CD4-positive, alpha-beta T cell (primary cell): ENCODE measurements at regions of chr20 and their contacts with region 1.

Region 1: GRCh38 chr20:32902456-32903420 is 44.0 kb downstream of the EFCAB8 start:
- DNase-seq: peak; percentile 61 to 85 (median 66)
- ATAC-seq: peak; percentile 95
- H3K4me3 ChIP-seq: no peak overlapping the region
- H3K4me3 Mint-ChIP-seq: no peak overlapping the region
- H3K27ac ChIP-seq: no peak overlapping the region
- H3K27ac Mint-ChIP-seq: peak overlapping the region; percentile 47
- H3K4me1 ChIP-seq: peaks cover 36% of the 10 kb centered on the region
- H3K4me1 Mint-ChIP-seq: peaks cover 37% of the 10 kb centered on the region
- H3K27me3 ChIP-seq: no peaks in the 10 kb centered on the region
- H3K27me3 Mint-ChIP-seq: no peaks in the 10 kb centered on the region
- CTCF ChIP-seq: peak; percentile 90

Region 2: DNA sequence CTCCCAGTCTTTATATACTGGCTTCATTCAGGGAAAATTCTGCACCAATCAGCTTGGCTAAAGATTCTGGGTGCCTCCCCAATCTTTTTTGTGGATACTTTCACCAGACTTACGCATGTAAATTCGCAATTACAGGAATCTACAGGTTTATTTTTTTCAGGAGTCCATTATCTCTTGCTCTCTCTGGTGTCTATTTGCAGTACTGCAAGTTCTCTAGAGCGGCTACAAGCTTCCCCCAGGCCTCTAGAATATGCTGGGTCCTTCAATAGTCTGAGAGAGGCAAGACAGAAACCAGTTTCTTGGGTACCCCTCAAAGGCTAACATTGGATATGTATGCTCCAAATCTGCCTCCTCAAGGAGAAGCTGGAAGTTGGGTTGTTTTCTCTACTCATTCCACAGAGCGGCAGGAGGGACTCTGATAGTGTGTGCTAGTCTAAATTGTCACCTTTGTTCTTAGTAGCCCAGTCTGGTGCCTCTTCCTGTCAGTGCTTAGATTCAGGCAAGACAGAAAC is 43.0 kb after region 1 on chr20:
- CTCF ChIA-PET with region 1: interaction called, 7 read pairs
- POLR2A ChIA-PET with region 1: interaction called, 3 read pairs
- intact Hi-C with region 1: loop called (anchors 1 to 2 kb)
- DNase-seq: peak in 5 of 14 experiments; percentile 7 to 72 (median 50)
- ATAC-seq: peak; percentile 93
- H3K4me3 ChIP-seq: no peak overlapping the region
- H3K4me3 Mint-ChIP-seq: peak overlapping the region; percentile 30
- H3K27ac ChIP-seq: peak overlapping the region in 1 of 2 donors; percentile 0
- H3K27ac Mint-ChIP-seq: peak overlapping the region; percentile 88
- H3K4me1 ChIP-seq: peaks cover 18% of the 10 kb centered on the region
- H3K4me1 Mint-ChIP-seq: peaks cover 42% of the 10 kb centered on the region
- H3K27me3 ChIP-seq: no peaks in the 10 kb centered on the region
- H3K27me3 Mint-ChIP-seq: no peaks in the 10 kb centered on the region
- CTCF ChIP-seq: peak; percentile 73

Region 3: DNA sequence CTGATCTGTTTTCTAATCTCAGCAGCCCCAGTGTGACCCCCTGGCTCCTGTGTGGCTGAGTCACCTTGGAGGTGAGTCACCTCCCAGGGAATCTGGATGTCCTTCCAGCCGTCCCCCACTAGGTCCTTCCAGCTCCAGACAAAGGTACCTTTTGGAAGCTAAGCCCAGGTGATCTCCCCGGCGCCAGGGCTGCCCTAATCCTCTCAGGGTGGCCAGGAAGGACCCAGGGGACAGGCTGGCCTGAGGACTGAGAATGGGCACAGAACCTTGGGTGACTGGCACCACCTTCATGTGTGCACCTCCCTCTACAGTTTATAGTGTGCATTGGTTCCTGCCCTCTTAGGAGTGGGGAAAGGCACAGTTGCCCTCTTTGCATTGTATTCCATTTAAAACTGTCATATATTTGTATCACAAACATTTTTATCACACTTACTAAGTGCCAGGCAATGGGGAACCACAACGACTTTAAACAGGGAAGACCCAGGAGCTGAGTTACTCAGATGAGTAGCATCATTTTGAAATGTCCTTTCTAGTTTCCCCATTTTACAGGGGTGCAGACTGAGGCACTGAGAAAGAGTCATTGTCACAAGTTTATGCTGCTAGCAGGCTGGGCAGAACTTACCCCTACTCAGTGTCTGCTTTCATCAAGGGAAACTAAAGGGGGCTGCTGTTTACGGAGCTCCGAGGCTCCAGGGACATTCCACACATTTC is 174.1 kb after region 1 on chr20:
- CTCF ChIA-PET with region 1: interaction called, 4 read pairs
- POLR2A ChIA-PET with region 1: no interaction called
- intact Hi-C with region 1: loop called (anchors 2 to 5 kb)
- DNase-seq: peak in 5 of 14 experiments; percentile 5 to 58 (median 40)
- ATAC-seq: peak; percentile 32
- H3K4me3 ChIP-seq: no peak overlapping the region
- H3K4me3 Mint-ChIP-seq: no peak overlapping the region
- H3K27ac ChIP-seq: no peak overlapping the region
- H3K27ac Mint-ChIP-seq: no peak overlapping the region
- H3K4me1 ChIP-seq: peaks cover 10% of the 10 kb centered on the region
- H3K4me1 Mint-ChIP-seq: peaks cover 8% of the 10 kb centered on the region
- H3K27me3 ChIP-seq: no peaks in the 10 kb centered on the region
- H3K27me3 Mint-ChIP-seq: no peaks in the 10 kb centered on the region
- CTCF ChIP-seq: no peak

Region 4: GRCh38 chr20:33211817-33212424 is 309.2 kb after region 1 on chr20:
- CTCF ChIA-PET with region 1: no interaction called
- POLR2A ChIA-PET with region 1: no interaction called
- intact Hi-C with region 1: loop called (anchors 2 to 5 kb)
- DNase-seq: peak in 7 of 14 experiments; percentile 7 to 47 (median 26)
- ATAC-seq: peak; percentile 43
- H3K4me3 ChIP-seq: no peak overlapping the region
- H3K4me3 Mint-ChIP-seq: no peak overlapping the region
- H3K27ac ChIP-seq: no peak overlapping the region
- H3K27ac Mint-ChIP-seq: no peak overlapping the region
- H3K4me1 ChIP-seq: no peaks in the 10 kb centered on the region
- H3K4me1 Mint-ChIP-seq: no peaks in the 10 kb centered on the region
- H3K27me3 ChIP-seq: peaks cover 11 to 19% of the 10 kb centered on the region in 2 experiments
- H3K27me3 Mint-ChIP-seq: peaks cover 60% of the 10 kb centered on the region
- CTCF ChIP-seq: no peak

Region 5: DNA sequence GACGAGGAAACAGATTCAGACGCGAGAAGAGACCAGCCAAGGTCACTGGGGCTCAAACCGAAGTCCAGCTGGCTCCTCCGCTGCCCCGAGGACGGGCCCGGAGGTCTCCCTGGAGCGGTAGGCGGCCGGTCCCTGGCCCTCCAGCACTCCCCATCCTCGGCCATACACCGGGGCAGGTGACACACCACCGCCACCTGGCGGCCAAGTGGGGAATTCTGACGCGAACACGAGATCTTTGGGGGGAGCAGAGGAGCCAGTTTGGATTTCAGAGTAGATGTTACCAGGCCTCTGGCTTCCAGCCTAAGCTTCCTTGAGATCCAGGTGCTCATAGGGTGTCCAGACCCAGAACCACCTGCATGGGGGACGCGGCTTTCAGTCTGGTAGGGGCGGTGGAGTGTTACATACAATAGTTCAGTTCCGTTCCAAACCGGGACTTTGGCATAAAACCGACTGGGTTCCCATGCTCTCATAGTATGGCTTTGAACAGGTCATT is 396.4 kb after region 1 on chr20:
- CTCF ChIA-PET with region 1: no interaction called
- POLR2A ChIA-PET with region 1: no interaction called
- intact Hi-C with region 1: loop called (anchors 1 kb)
- DNase-seq: peak; percentile 49 to 84 (median 70)
- ATAC-seq: peak; percentile 79
- H3K4me3 ChIP-seq: no peak overlapping the region
- H3K4me3 Mint-ChIP-seq: no peak overlapping the region
- H3K27ac ChIP-seq: no peak overlapping the region
- H3K27ac Mint-ChIP-seq: no peak overlapping the region
- H3K4me1 ChIP-seq: peaks cover 6% of the 10 kb centered on the region
- H3K4me1 Mint-ChIP-seq: no peaks in the 10 kb centered on the region
- H3K27me3 ChIP-seq: no peaks in the 10 kb centered on the region
- H3K27me3 Mint-ChIP-seq: no peaks in the 10 kb centered on the region
- CTCF ChIP-seq: peak; percentile 87

Region 6: DNA sequence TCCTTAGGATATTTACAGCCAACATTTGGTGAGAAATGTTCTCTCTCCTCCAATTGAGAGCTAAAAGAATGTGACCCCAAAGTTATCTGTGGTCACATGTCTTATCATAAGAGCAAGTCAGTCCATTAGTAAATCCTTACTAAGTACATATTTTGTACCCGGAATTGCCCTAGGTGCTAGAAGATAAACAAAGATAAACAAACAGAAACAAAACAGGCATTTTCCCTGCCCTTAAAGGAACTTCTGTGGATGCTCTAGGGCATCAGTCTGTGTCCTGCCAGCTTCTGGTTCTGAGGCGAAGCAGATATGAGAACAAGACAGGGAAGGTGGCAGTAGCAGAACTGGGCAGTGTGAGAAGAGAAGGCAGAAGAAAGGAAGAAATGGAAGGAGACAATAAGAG is 456.7 kb after region 1 on chr20:
- CTCF ChIA-PET with region 1: no interaction called
- POLR2A ChIA-PET with region 1: no interaction called
- intact Hi-C with region 1: no loop called
- DNase-seq: no peak
- ATAC-seq: no peak
- H3K4me3 ChIP-seq: no peak overlapping the region
- H3K4me3 Mint-ChIP-seq: no peak overlapping the region
- H3K27ac ChIP-seq: no peak overlapping the region
- H3K27ac Mint-ChIP-seq: no peak overlapping the region
- H3K4me1 ChIP-seq: no peaks in the 10 kb centered on the region
- H3K4me1 Mint-ChIP-seq: no peaks in the 10 kb centered on the region
- H3K27me3 ChIP-seq: no peaks in the 10 kb centered on the region
- H3K27me3 Mint-ChIP-seq: no peaks in the 10 kb centered on the region
- CTCF ChIP-seq: no peak